ENCODE measurements at regions of chr9 and their contacts with region 1.

Region 1: DNA sequence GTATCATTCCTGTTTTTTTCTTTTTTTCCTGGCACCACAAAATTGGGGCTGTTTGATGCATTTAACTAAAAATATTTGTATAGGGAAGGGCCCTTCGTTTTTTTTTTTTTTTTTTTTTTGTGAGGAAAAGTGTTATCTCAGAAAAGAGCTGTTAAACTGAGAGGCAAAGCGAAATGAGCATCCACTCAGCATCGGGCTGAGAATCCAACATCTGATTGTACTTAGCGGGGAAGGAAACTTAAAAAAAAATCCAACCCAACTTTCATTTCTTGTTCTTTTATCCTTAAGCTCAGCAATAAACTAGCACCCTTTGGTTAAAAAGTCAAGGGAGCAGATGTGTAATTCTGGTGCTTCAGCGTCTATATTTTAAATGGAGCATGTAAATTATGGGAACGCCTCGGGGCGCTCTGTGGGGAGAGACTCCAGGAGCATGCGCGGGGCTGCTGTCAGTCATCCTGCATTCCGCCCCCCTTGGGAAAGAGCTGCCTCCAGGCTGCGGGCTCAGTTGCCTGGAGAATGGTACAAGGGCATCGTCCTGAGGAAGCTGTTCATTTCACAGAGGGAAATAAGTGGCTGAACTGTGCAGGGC is 33.3 kb downstream of the DMRT2 start:
- DNase-seq: peak; percentile 26
- ATAC-seq: peak; percentile 71
- H3K4me3 ChIP-seq: peak overlapping the region; percentile 60
- H3K27ac ChIP-seq: no peak overlapping the region
- H3K4me1 ChIP-seq: no peaks in the 10 kb centered on the region
- H3K27me3 ChIP-seq: no peaks in the 10 kb centered on the region
- CTCF ChIP-seq: no peak

Region 2: GRCh38 chr9:1055141-1055540 is 28.3 kb before region 1 on chr9:
- CTCF ChIA-PET with region 1: no interaction called
- POLR2A ChIA-PET with region 1: no interaction called
- intact Hi-C with region 1: loop called (anchors 1 kb)
- DNase-seq: peak; percentile 88
- ATAC-seq: peak; percentile 89
- H3K4me3 ChIP-seq: peak overlapping the region; percentile 19; the same call in 1 of the 2 replicates
- H3K27ac ChIP-seq: peak overlapping the region; percentile 90
- H3K4me1 ChIP-seq: peaks cover 46% of the 10 kb centered on the region
- H3K27me3 ChIP-seq: no peaks in the 10 kb centered on the region
- CTCF ChIP-seq: no peak

Region 3: GRCh38 chr9:1411826-1412225 is 328.4 kb after region 1 on chr9:
- CTCF ChIA-PET with region 1: no interaction called
- POLR2A ChIA-PET with region 1: interaction called, 12 read pairs
- intact Hi-C with region 1: no loop called
- DNase-seq: no peak
- ATAC-seq: no peak
- H3K4me3 ChIP-seq: no peak overlapping the region
- H3K27ac ChIP-seq: no peak overlapping the region
- H3K4me1 ChIP-seq: no peaks in the 10 kb centered on the region
- H3K27me3 ChIP-seq: no peaks in the 10 kb centered on the region
- CTCF ChIP-seq: no peak